ENCODE measurements at regions of chr15 and their contacts with region 1.

Region 1: GRCh38 chr15:92808978-92809879 is 90.9 kb upstream of the CHD2 start:
- DNase-seq: peak; percentile 97 to 100 (median 99)
- ATAC-seq: peak; percentile 87
- H3K4me3 ChIP-seq: peak overlapping the region; percentile 86
- H3K4me3 Mint-ChIP-seq: peak overlapping the region; percentile 86 to 96 (median 92)
- H3K27ac ChIP-seq: peak overlapping the region; percentile 99
- H3K27ac Mint-ChIP-seq: peak overlapping the region; percentile 94 to 100 (median 99)
- H3K4me1 ChIP-seq: peaks cover 12 to 43% of the 10 kb centered on the region in 2 donors
- H3K4me1 Mint-ChIP-seq: peaks cover 24 to 61% (median 54%) of the 10 kb centered on the region in 7 donors
- H3K27me3 ChIP-seq: no peaks in the 10 kb centered on the region
- H3K27me3 Mint-ChIP-seq: peaks cover 0 to 1% (median 0%) of the 10 kb centered on the region in 5 donors

Region 2: GRCh38 chr15:92681141-92681631 is 128.0 kb before region 1 on chr15:
- CTCF ChIA-PET with region 1: no interaction called
- POLR2A ChIA-PET with region 1: no interaction called
- intact Hi-C with region 1: no loop called
- DNase-seq: no peak
- ATAC-seq: no peak
- H3K4me3 ChIP-seq: no peak overlapping the region
- H3K4me3 Mint-ChIP-seq: no peak overlapping the region
- H3K27ac ChIP-seq: no peak overlapping the region
- H3K27ac Mint-ChIP-seq: no peak overlapping the region
- H3K4me1 ChIP-seq: no peaks in the 10 kb centered on the region
- H3K4me1 Mint-ChIP-seq: peaks cover 0 to 4% (median 0%) of the 10 kb centered on the region in 7 donors
- H3K27me3 ChIP-seq: no peaks in the 10 kb centered on the region
- H3K27me3 Mint-ChIP-seq: peaks cover 5 to 33% (median 20%) of the 10 kb centered on the region in 5 donors

Region 3: DNA sequence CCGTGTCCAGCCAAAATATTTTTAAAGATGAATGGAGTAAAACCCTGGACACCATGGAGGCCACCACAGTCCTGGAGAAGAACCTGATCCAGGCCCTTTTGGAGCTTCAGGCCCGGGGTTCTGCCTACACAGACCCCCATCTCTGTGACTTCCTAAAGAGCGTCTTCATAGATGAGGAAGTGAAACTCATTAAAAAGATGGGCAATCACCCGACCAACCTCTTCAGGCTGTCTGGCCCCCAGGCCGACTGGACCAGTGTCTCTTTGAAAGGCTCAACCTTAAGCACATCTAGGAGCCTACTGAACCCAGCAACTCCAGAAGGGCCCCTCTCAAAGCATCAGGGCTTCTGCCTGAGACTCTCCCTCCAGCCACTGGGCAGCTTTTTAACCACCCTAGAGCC is 45.8 kb before region 1 on chr15:
- CTCF ChIA-PET with region 1: no interaction called
- POLR2A ChIA-PET with region 1: no interaction called
- intact Hi-C with region 1: no loop called
- DNase-seq: no peak
- ATAC-seq: no peak
- H3K4me3 ChIP-seq: no peak overlapping the region
- H3K4me3 Mint-ChIP-seq: no peak overlapping the region
- H3K27ac ChIP-seq: no peak overlapping the region
- H3K27ac Mint-ChIP-seq: no peak overlapping the region
- H3K4me1 ChIP-seq: no peaks in the 10 kb centered on the region
- H3K4me1 Mint-ChIP-seq: no peaks in the 10 kb centered on the region
- H3K27me3 ChIP-seq: no peaks in the 10 kb centered on the region
- H3K27me3 Mint-ChIP-seq: peaks cover 0 to 4% (median 0%) of the 10 kb centered on the region in 5 donors

Region 4: GRCh38 chr15:92797168-92797951 is 11.9 kb before region 1 on chr15:
- CTCF ChIA-PET with region 1: interaction called, 14 read pairs
- POLR2A ChIA-PET with region 1: interaction called, 13 read pairs
- intact Hi-C with region 1: loop called in 1 of 2 experiments (anchors 1 kb)
- DNase-seq: peak in 7 of 9 donors; percentile 61 to 81 (median 74)
- ATAC-seq: peak; percentile 95
- H3K4me3 ChIP-seq: no peak overlapping the region
- H3K4me3 Mint-ChIP-seq: peak overlapping the region in 1 of 10 donors; percentile 12
- H3K27ac ChIP-seq: no peak overlapping the region
- H3K27ac Mint-ChIP-seq: peak overlapping the region; percentile 72 to 95 (median 79)
- H3K4me1 ChIP-seq: peaks cover 3 to 4% of the 10 kb centered on the region in 2 donors
- H3K4me1 Mint-ChIP-seq: peaks cover 6 to 23% (median 12%) of the 10 kb centered on the region in 7 donors
- H3K27me3 ChIP-seq: no peaks in the 10 kb centered on the region
- H3K27me3 Mint-ChIP-seq: no peaks in the 10 kb centered on the region

Region 5: GRCh38 chr15:92831655-92832328 is 22.6 kb after region 1 on chr15:
- CTCF ChIA-PET with region 1: interaction called, 16 read pairs
- POLR2A ChIA-PET with region 1: interaction called, 193 read pairs
- intact Hi-C with region 1: loop called (anchors 1 kb)
- DNase-seq: peak; percentile 53 to 98 (median 86)
- ATAC-seq: peak; percentile 94
- H3K4me3 ChIP-seq: peak overlapping the region; percentile 21
- H3K4me3 Mint-ChIP-seq: peak overlapping the region; percentile 74 to 91 (median 81)
- H3K27ac ChIP-seq: peak overlapping the region; percentile 81
- H3K27ac Mint-ChIP-seq: peak overlapping the region; percentile 92 to 98 (median 97)
- H3K4me1 ChIP-seq: peaks cover 31 to 53% of the 10 kb centered on the region in 2 donors
- H3K4me1 Mint-ChIP-seq: peaks cover 26 to 61% (median 50%) of the 10 kb centered on the region in 7 donors
- H3K27me3 ChIP-seq: no peaks in the 10 kb centered on the region
- H3K27me3 Mint-ChIP-seq: no peaks in the 10 kb centered on the region

Region 6: DNA sequence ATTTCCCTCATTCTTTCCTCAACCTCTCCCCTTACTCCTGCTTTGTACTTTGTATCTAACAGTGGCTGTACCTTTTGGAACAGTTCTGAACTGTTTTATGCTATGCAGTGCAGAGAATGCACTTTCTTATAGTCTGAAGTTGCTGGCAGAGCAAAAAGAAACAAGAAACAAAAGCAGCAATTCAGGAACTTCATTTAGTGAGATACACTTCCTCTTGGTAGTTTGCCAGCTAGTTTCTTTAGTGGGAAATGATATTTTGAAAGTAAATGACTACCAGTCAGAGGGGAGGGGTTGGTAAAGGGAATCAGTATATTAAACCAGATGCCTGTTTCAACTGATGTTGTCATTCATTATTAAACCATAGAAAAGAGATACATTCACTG is 35.9 kb after region 1 on chr15:
- CTCF ChIA-PET with region 1: interaction called, 3 read pairs
- POLR2A ChIA-PET with region 1: interaction called, 26 read pairs
- intact Hi-C with region 1: loop called (anchors 1 kb)
- DNase-seq: peak in 7 of 9 donors; percentile 66 to 83 (median 73)
- ATAC-seq: peak; percentile 66
- H3K4me3 ChIP-seq: peak overlapping the region; percentile 11
- H3K4me3 Mint-ChIP-seq: peak overlapping the region; percentile 56 to 95 (median 82)
- H3K27ac ChIP-seq: peak overlapping the region; percentile 72
- H3K27ac Mint-ChIP-seq: peak overlapping the region; percentile 93 to 99 (median 97)
- H3K4me1 ChIP-seq: peaks cover 21 to 78% of the 10 kb centered on the region in 2 donors
- H3K4me1 Mint-ChIP-seq: peaks cover 41 to 91% (median 81%) of the 10 kb centered on the region in 7 donors
- H3K27me3 ChIP-seq: no peaks in the 10 kb centered on the region
- H3K27me3 Mint-ChIP-seq: no peaks in the 10 kb centered on the region

Region 7: GRCh38 chr15:92881802-92882696 is 72.8 kb after region 1 on chr15:
- CTCF ChIA-PET with region 1: interaction called, 44 read pairs
- POLR2A ChIA-PET with region 1: interaction called, 629 read pairs
- intact Hi-C with region 1: loop called (anchors 1 kb)
- DNase-seq: peak; percentile 95 to 100 (median 99)
- ATAC-seq: peak; percentile 93
- H3K4me3 ChIP-seq: peak overlapping the region; percentile 61
- H3K4me3 Mint-ChIP-seq: peak overlapping the region; percentile 86 to 97 (median 91)
- H3K27ac ChIP-seq: peak overlapping the region; percentile 79
- H3K27ac Mint-ChIP-seq: peak overlapping the region; percentile 97 to 100 (median 99)
- H3K4me1 ChIP-seq: peaks cover 42 to 45% of the 10 kb centered on the region in 2 donors
- H3K4me1 Mint-ChIP-seq: peaks cover 40 to 72% (median 60%) of the 10 kb centered on the region in 7 donors
- H3K27me3 ChIP-seq: no peaks in the 10 kb centered on the region
- H3K27me3 Mint-ChIP-seq: peaks cover 0 to 2% (median 0%) of the 10 kb centered on the region in 5 donors

Region 8: DNA sequence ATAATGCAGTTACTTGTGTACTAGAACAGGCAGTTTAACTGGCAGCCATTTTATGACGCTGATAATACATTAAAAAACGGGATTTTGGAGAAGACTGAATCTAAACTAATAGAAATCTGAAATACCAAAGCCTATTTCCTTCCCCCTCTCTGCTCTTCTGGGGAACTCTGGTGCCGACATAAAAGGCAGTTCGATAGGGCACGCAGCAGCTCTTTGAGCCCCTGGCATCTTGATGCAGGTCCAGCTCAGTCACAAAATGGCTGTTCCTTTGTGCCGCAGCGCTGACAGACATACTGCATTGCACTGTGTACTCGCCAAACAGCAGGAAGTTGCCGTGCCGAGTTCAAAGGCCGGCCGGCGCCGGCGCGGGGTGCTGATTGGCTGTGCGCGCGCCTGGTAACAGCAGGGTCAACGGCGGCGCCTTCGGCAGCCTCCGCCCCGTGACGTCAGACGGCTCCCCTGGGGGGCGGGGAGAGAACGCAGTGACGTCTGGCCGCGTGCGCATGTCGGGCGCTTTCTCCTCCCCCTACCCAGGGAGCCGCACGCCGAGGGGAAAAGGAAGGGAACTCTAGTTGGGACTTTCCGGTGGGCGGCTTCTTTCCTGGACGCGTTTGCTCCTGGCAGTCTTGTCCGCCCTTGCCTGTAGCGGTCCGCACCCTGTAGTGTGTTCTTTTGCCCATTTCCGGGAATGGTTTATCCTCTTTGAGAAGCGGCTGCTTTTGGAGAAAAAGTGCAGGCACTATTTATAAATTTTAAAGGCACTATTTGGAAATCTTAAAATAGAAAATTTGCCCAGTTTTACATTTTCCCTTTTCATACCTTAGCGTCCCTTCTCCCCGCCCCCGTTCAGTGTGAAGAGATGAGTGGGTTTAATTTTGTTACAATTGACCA is 95.0 kb after region 1 on chr15:
- CTCF ChIA-PET with region 1: interaction called, 38 read pairs
- POLR2A ChIA-PET with region 1: interaction called, 420 read pairs
- intact Hi-C with region 1: loop called (anchors 1 kb)
- DNase-seq: peak; percentile 99
- ATAC-seq: peak; percentile 90
- H3K4me3 ChIP-seq: peak overlapping the region; percentile 79
- H3K4me3 Mint-ChIP-seq: peak overlapping the region; percentile 81 to 100 (median 94)
- H3K27ac ChIP-seq: peak overlapping the region; percentile 97
- H3K27ac Mint-ChIP-seq: peak overlapping the region; percentile 96 to 100 (median 100)
- H3K4me1 ChIP-seq: peaks cover 48 to 54% of the 10 kb centered on the region in 2 donors
- H3K4me1 Mint-ChIP-seq: peaks cover 39 to 71% (median 64%) of the 10 kb centered on the region in 7 donors
- H3K27me3 ChIP-seq: no peaks in the 10 kb centered on the region
- H3K27me3 Mint-ChIP-seq: no peaks in the 10 kb centered on the region

Region 9: GRCh38 chr15:92924216-92924615 is 115.0 kb after region 1 on chr15:
- CTCF ChIA-PET with region 1: interaction called, 70 read pairs
- POLR2A ChIA-PET with region 1: interaction called, 184 read pairs
- intact Hi-C with region 1: no loop called
- DNase-seq: no peak
- ATAC-seq: no peak
- H3K4me3 ChIP-seq: no peak overlapping the region
- H3K4me3 Mint-ChIP-seq: peak overlapping the region in 8 of 10 donors; percentile 2 to 72 (median 44)
- H3K27ac ChIP-seq: no peak overlapping the region
- H3K27ac Mint-ChIP-seq: peak overlapping the region; percentile 29 to 95 (median 71)
- H3K4me1 ChIP-seq: peaks cover 35 to 39% of the 10 kb centered on the region in 2 donors
- H3K4me1 Mint-ChIP-seq: peaks cover 46 to 97% (median 90%) of the 10 kb centered on the region in 7 donors
- H3K27me3 ChIP-seq: no peaks in the 10 kb centered on the region
- H3K27me3 Mint-ChIP-seq: no peaks in the 10 kb centered on the region

Region 10: DNA sequence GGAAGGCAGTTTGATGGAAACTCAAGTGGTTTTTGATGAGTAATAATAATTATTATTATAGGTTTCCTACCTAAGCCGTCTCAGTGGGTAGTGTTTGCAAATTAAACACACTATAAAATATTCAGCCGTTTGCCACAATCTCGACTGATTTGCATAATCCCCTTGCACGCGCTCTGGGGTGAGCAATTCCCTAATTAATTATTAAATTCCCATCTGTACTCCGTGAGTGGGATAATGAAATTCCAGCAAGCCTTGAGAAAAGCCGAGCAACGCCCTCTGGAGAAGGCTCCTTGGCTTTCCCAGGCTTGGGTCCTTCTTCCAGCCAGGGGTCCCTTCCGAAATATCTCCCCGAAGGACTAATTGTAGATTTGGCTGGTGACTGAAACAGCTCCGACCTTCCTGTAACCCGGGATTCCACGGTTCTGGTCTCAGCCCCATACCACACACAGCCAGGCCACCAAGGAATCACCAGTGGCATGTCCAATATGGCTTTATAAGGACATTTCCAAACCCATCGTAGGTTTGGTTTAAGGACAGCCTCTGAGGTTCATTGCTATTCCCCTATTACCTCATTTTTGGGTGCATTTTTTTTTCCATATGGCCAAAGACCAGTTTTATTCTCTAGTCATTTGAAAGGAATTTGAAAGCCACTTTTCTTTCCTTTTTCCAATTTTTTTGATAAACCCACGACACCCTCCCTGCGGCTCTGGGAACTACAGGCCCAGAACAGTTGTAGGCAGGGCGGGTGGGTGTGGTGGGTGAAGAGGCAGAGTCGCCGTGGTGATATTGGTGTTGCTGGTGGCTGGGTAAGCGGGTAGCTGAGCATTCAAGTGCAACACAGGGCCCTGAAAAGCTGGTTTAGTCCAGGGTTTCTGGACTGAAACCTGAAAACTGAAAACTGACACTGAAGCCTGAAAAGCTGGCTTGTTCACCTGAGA is 313.0 kb after region 1 on chr15:
- CTCF ChIA-PET with region 1: no interaction called
- POLR2A ChIA-PET with region 1: no interaction called
- intact Hi-C with region 1: no loop called
- DNase-seq: no peak
- ATAC-seq: no peak
- H3K4me3 ChIP-seq: no peak overlapping the region
- H3K4me3 Mint-ChIP-seq: no peak overlapping the region
- H3K27ac ChIP-seq: no peak overlapping the region
- H3K27ac Mint-ChIP-seq: no peak overlapping the region
- H3K4me1 ChIP-seq: no peaks in the 10 kb centered on the region
- H3K4me1 Mint-ChIP-seq: peaks cover 0 to 8% (median 0%) of the 10 kb centered on the region in 7 donors
- H3K27me3 ChIP-seq: no peaks in the 10 kb centered on the region
- H3K27me3 Mint-ChIP-seq: peaks cover 9 to 21% (median 12%) of the 10 kb centered on the region in 5 donors

Measured in naive thymus-derived CD4-positive, alpha-beta T cell (primary cell).